ENCODE measurements at regions of chr11 and their contacts with region 1.

Region 1: DNA sequence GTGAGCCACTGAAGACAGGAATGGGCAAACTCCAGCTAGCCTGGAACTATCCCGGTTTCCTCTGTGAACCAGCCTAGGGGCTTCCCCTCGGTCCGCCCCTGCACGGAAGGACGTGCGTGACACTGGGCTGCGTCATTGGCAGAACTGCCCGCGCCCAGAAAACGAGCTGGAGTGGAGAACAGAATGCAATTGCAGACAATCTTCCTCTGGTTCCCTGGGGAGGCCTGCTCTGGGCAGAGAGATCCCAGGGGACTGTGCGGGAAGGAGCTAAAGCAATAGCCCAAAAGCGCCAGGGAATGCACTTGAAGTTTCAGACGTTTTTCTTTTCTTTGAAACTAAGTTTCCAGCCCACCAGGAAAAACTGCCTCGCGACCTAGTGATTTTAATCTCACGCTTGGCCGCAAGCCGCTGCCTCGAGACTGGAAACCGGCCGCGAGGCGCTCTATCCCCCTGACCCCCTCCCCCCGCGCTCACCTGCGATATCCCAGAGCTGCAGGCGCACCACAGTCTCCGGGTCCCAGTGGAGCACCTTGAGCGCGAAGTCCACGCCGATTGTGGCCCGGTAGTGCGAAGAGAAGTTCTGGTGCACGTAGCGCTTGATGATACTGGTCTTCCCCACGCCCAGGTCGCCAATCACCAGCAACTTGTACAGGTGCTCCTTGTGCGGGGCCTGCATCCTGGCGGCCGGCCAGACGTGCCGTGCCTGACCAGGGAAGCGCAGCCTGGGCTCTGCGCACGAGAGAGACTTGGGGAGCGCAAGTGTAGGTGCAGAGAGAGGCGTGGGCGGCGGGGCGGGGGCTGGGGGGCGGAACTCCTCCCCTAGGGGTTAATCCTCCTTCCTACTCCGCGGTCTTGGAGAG is at the start of gene RAB38:
- DNase-seq: peak; percentile 55 to 58
- H3K4me3 ChIP-seq: peak within 1 kb of the TSS; percentile 39 to 69 (median 60)
- H3K27ac ChIP-seq: peak within 1 kb of the TSS; percentile 72 to 81
- H3K4me1 ChIP-seq: peaks cover 0 to 3% of the 10 kb centered on the region in 2 donors
- H3K27me3 ChIP-seq: no peaks in the 10 kb centered on the region
- CTCF ChIP-seq: no peak
- POLR2A ChIP-seq: no peak
- total RNA-seq, gene RAB38: 1.6 to 14.8 (median 5.2) TPM

Region 2: GRCh38 chr11:87859583-87860149 is 315.3 kb before region 1 on chr11:
- intact Hi-C with region 1: no loop called
- DNase-seq: no peak
- H3K4me3 ChIP-seq: no peak overlapping the region
- H3K27ac ChIP-seq: no peak overlapping the region
- H3K4me1 ChIP-seq: no peaks in the 10 kb centered on the region
- H3K27me3 ChIP-seq: no peaks in the 10 kb centered on the region
- CTCF ChIP-seq: no peak
- POLR2A ChIP-seq: no peak

Region 3: GRCh38 chr11:89125298-89125697 is 950.4 kb after region 1 on chr11:
- intact Hi-C with region 1: loop called (anchors 5 kb)
- DNase-seq: no peak
- H3K4me3 ChIP-seq: no peak overlapping the region
- H3K27ac ChIP-seq: no peak overlapping the region
- H3K4me1 ChIP-seq: no peaks in the 10 kb centered on the region
- H3K27me3 ChIP-seq: no peaks in the 10 kb centered on the region
- CTCF ChIP-seq: no peak
- POLR2A ChIP-seq: no peak

Measured in breast epithelium (tissue), 4 donors.